ENCODE measurements at regions of chr11 and their contacts with region 1.

Region 1: DNA sequence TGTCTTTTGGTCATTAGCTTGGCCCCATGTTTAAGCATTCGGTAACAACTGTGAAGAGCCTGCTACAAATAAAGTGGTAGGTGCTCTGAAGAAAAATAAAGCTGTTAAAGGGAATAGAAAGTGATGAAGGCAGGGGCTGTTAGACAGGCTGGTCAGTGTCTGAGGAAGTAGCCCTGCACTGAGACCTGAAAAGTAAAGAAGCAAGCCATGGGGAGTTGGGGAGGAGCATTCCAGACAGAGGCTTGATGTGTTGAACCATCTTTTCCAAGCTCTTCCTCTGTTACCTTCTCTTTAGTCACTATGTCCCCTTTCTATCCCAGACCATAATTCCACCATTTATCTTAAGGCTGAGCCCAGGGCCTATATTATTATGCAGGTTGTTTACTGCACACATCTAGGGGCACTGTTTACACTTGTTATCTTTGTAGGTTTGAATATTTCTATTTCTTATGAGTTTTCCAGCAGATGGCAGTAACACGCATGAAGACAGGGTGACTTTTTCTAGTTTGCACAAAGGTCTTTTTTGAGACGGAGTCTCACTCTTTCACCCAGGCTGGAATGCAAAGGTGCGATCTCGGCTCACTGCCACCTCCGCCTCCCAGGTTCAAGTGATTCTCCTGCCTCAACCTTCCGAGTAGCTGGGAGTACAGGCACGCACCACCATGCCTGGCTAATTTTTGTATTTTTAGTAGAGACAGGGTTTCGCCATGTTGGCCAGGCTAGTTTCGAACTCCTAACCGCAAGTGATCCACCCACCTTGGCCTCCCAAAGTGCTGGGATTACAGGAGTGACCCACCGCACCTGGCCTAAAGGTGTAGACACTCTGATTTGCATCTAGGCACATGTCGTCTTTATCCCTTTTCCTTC is 23.0 kb downstream of the ZFTA start:
- DNase-seq: no peak
- H3K4me3 ChIP-seq: no peak overlapping the region
- H3K27ac ChIP-seq: no peak overlapping the region
- H3K4me1 ChIP-seq: no peaks in the 10 kb centered on the region
- H3K27me3 ChIP-seq: no peaks in the 10 kb centered on the region
- CTCF ChIP-seq: peak in 2 of 4 experiments; percentile 22 to 28
- POLR2A ChIP-seq: no peak

Region 2: DNA sequence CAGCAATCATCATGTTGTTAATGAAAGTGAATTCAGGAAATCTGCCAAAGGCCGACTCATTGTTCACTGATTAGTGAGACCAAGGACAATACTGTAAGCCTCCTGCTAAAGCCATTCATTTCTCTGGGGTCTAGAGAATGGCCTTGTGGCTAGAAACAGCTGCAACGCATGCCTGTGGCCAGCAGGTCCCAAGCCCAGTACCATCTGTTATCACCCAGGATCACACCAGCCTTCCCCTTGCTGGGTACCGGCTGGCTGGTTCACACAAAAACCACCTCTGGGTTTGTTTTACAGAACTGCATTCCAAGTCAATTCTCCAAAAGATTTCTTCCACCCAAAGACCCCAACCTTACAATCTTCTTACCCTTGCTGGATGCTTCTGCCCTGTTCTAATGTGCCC is 255.7 kb before region 1 on chr11:
- intact Hi-C with region 1: loop called (anchors 10 kb)
- DNase-seq: no peak
- H3K4me3 ChIP-seq: no peak overlapping the region
- H3K27ac ChIP-seq: peak overlapping the region in 1 of 2 donors; percentile 77
- H3K4me1 ChIP-seq: peaks cover 0 to 6% of the 10 kb centered on the region in 2 donors
- H3K27me3 ChIP-seq: no peaks in the 10 kb centered on the region
- CTCF ChIP-seq: no peak
- POLR2A ChIP-seq: no peak

Region 3: GRCh38 chr11:63698976-63699733 is 46.4 kb before region 1 on chr11:
- intact Hi-C with region 1: no loop called
- DNase-seq: no peak
- H3K4me3 ChIP-seq: no peak overlapping the region
- H3K27ac ChIP-seq: peak overlapping the region in 1 of 2 donors; percentile 18
- H3K4me1 ChIP-seq: no peaks in the 10 kb centered on the region
- H3K27me3 ChIP-seq: no peaks in the 10 kb centered on the region
- CTCF ChIP-seq: no peak
- POLR2A ChIP-seq: no peak

Measured in uterus (tissue), 4 donors.